GM18951 (cell line): ENCODE measurements at regions of chr12 and their contacts with region 1.

Region 1: GRCh38 chr12:56307221-56307965 is 7.3 kb upstream of the CS start:
- POLR2A ChIP-seq: no peak

Region 2: GRCh38 chr12:56461235-56462159 is 154.1 kb after region 1 on chr12:
- in situ Hi-C with region 1: loop called (anchors 5 kb)
- POLR2A ChIP-seq: no peak